ENCODE measurements at regions of chr4 and their contacts with region 1.

Region 1: GRCh38 chr4:48085821-48086607 is 48.0 kb downstream of the TXK start:
- DNase-seq: no peak
- H3K4me3 ChIP-seq: no peak overlapping the region
- H3K4me3 Mint-ChIP-seq: no peak overlapping the region
- H3K27ac ChIP-seq: no peak overlapping the region
- H3K27ac Mint-ChIP-seq: peak overlapping the region in 2 of 7 donors; percentile 22 to 46
- H3K4me1 ChIP-seq: no peaks in the 10 kb centered on the region
- H3K4me1 Mint-ChIP-seq: peaks cover 5 to 19% (median 9%) of the 10 kb centered on the region in 4 donors
- H3K27me3 ChIP-seq: no peaks in the 10 kb centered on the region
- H3K27me3 Mint-ChIP-seq: no peaks in the 10 kb centered on the region

Region 2: GRCh38 chr4:47668810-47669408 is 417.1 kb before region 1 on chr4:
- CTCF ChIA-PET with region 1: no interaction called
- POLR2A ChIA-PET with region 1: no interaction called
- intact Hi-C with region 1: loop called (anchors 5 kb)
- DNase-seq: peak in 4 of 5 donors; percentile 24 to 33 (median 28)
- H3K4me3 ChIP-seq: no peak overlapping the region
- H3K4me3 Mint-ChIP-seq: no peak overlapping the region
- H3K27ac ChIP-seq: no peak overlapping the region
- H3K27ac Mint-ChIP-seq: no peak overlapping the region
- H3K4me1 ChIP-seq: no peaks in the 10 kb centered on the region
- H3K4me1 Mint-ChIP-seq: peaks cover 0 to 2% (median 1%) of the 10 kb centered on the region in 4 donors
- H3K27me3 ChIP-seq: no peaks in the 10 kb centered on the region
- H3K27me3 Mint-ChIP-seq: peaks cover 7 to 18% of the 10 kb centered on the region in 2 donors

Region 3: GRCh38 chr4:48002267-48002666 is 83.7 kb before region 1 on chr4:
- CTCF ChIA-PET with region 1: interaction called, 44 read pairs
- POLR2A ChIA-PET with region 1: no interaction called
- intact Hi-C with region 1: loop called (anchors 1 kb)
- DNase-seq: no peak
- H3K4me3 ChIP-seq: no peak overlapping the region
- H3K4me3 Mint-ChIP-seq: no peak overlapping the region
- H3K27ac ChIP-seq: no peak overlapping the region
- H3K27ac Mint-ChIP-seq: no peak overlapping the region
- H3K4me1 ChIP-seq: no peaks in the 10 kb centered on the region
- H3K4me1 Mint-ChIP-seq: peaks cover 0 to 2% (median 0%) of the 10 kb centered on the region in 4 donors
- H3K27me3 ChIP-seq: peaks cover 4% of the 10 kb centered on the region
- H3K27me3 Mint-ChIP-seq: peaks cover 2 to 6% of the 10 kb centered on the region in 2 donors

Region 4: DNA sequence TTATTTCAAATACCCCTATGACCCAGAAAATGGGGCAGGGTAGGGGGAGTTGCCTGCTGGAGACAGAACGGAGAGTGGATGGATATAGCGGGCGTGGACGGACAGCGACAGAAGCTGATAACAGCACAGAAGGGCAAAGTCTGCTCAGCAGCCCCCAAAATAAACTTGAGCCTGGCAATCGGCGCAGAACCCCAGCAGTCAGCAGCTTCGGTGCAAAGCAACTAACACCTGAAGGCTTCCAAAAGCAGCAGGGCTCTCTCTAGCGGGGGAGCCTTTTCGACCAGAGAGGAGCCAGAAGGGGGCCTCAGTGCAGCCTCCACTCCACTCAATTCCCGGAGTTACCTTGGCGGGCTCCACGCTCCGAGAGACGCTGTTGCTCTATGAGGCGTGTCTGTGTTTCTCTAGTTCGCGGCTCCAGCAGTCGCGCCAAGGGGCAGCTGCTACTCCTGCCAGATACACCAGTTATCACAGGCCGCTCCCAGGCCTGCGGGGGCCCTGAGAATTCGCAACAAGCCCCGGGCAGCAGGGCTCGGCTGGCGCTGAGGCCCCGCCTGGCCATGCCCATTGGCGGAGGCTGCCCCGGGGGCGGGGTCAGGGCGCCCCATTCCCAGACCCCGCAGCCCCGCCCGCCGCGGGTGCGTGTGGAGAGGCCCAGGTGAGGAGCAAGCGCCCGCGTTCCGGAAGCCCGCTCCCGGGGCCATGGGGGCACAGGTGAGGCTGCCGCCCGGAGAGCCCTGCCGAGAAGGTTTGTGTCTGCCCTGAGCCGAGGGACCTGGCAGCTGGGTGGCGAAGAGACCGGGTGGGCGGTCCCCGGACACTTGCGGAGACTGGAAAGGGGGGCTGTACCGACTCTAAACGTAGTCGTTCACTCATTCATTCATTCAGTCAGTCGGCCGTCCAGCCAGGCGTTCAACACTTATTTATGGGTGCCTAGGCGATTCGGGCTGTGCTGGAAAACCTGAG is 69.6 kb before region 1 on chr4 and contains the starts of genes CNGA1 and NIPAL1:
- CTCF ChIA-PET with region 1: no interaction called
- POLR2A ChIA-PET with region 1: no interaction called
- intact Hi-C with region 1: loop called (anchors 1 kb)
- DNase-seq: peak; percentile 63 to 71 (median 68)
- H3K4me3 ChIP-seq: peak within 1 kb of the TSS; percentile 50 to 57
- H3K4me3 Mint-ChIP-seq: peak within 1 kb of the TSS; percentile 77 to 92 (median 87)
- H3K27ac ChIP-seq: no peak within 1 kb of the TSS
- H3K27ac Mint-ChIP-seq: peak within 1 kb of the TSS in 4 of 7 donors; percentile 6 to 75 (median 40)
- H3K4me1 ChIP-seq: peaks cover 16% of the 10 kb centered on the region
- H3K4me1 Mint-ChIP-seq: peaks cover 4 to 12% (median 9%) of the 10 kb centered on the region in 4 donors
- H3K27me3 ChIP-seq: no peaks in the 10 kb centered on the region
- H3K27me3 Mint-ChIP-seq: peaks cover 8 to 16% of the 10 kb centered on the region in 2 donors
- total RNA-seq, gene CNGA1: not detected
- total RNA-seq, gene NIPAL1: 3.0 to 3.3 TPM

Region 5: DNA sequence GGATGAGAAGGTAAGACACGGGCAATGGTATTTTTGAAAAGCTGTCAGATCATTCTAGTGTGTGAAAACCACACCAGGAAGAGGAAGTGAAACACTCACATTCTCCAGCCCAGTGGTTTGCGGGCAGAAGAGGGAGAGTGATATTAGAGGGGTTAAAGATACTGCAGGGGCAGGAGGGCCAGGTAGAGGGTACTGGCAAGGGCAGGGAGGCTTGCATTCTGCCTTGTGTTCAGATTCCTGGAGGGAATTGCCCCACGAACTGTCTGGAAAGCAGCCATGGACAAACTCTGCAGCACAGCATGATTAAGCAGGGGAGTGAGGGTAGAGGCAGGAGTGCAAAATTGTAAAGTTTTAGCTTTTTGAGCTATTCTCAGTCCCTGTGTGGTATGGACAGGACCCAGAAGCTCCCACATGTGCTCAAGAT is 38.6 kb before region 1 on chr4:
- CTCF ChIA-PET with region 1: interaction called, 28 read pairs
- POLR2A ChIA-PET with region 1: no interaction called
- intact Hi-C with region 1: no loop called
- DNase-seq: peak; percentile 40 to 67 (median 51)
- H3K4me3 ChIP-seq: no peak overlapping the region
- H3K4me3 Mint-ChIP-seq: peak overlapping the region in 7 of 8 donors; percentile 46 to 90 (median 77)
- H3K27ac ChIP-seq: no peak overlapping the region
- H3K27ac Mint-ChIP-seq: peak overlapping the region in 4 of 7 donors; percentile 0 to 52 (median 22)
- H3K4me1 ChIP-seq: peaks cover 57% of the 10 kb centered on the region
- H3K4me1 Mint-ChIP-seq: peaks cover 37 to 68% (median 52%) of the 10 kb centered on the region in 4 donors
- H3K27me3 ChIP-seq: no peaks in the 10 kb centered on the region
- H3K27me3 Mint-ChIP-seq: peaks cover 4 to 10% of the 10 kb centered on the region in 2 donors

Region 6: DNA sequence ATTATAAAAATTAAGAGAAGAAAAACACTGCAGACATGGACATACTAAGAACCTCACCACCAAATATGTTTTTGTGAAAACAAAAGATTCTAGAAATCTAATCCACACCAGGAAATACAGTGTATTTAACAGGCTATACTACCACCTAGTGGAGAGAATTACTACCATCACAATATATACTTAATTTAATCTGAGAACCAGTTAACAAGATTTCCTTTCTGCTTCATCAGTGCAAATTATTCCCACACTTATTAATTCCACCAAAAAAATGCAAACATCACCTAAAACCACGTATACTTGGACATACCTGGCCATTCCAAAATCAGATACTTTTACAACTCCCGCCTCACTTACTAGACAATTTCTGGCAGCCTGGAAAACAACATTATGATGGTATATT is 55.0 kb after region 1 on chr4:
- CTCF ChIA-PET with region 1: interaction called, 3 read pairs
- POLR2A ChIA-PET with region 1: no interaction called
- intact Hi-C with region 1: loop called (anchors 2 kb)
- DNase-seq: peak in 4 of 5 donors; percentile 52 to 60 (median 54)
- H3K4me3 ChIP-seq: no peak overlapping the region
- H3K4me3 Mint-ChIP-seq: no peak overlapping the region
- H3K27ac ChIP-seq: no peak overlapping the region
- H3K27ac Mint-ChIP-seq: no peak overlapping the region
- H3K4me1 ChIP-seq: peaks cover 46% of the 10 kb centered on the region
- H3K4me1 Mint-ChIP-seq: peaks cover 42 to 52% (median 46%) of the 10 kb centered on the region in 4 donors
- H3K27me3 ChIP-seq: no peaks in the 10 kb centered on the region
- H3K27me3 Mint-ChIP-seq: no peaks in the 10 kb centered on the region